ENCODE measurements at regions of chr7 and their contacts with region 1.

Region 1: DNA sequence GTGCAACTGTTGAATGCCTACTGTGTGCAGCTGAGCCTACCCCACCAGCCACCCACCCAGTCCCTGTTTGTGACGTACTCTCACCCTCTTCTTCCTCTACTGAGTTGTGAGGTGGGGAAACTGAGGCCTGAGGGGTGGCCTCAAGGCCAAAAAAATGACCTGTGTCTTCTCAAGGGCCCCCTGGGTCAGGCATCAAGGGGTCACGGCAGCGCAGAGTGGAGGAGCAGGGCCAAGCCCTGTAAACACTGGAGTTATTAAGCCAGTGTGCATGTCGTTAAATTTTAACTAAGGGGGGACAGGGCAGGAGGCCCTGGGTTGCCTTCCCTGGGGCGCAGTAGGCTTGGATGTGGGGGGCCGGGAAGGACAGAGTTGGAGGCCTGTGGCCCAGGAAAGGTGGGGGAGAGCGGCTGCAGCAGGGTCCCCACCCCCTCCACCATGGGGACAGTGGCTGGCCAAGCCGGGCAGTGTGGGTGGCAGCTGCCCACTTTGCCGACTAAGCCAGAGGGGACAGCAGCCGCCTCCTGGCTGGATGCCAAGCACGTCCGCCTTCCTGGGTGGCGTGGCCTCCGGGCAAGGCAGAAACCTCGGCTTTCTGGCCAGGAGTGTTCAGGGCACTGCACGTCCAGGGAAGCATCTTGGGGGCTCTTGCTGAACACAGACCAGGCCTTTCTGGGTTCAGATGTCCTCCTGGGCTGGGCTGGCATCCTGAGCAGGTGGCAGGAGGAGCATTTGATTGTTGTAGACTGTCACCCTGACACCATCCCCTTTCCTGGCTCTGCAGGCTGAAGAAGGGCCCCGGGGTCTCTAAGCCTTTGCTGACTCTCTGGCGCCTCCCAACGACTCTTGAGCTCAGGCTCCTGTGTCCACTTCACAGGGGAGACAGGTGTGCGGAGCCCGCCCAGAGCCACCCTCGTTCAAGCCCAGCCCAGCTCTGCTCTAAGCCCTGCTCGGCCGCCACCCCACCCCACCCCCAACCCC is 1.9 kb downstream of the SLC29A4 start:
- DNase-seq: peak; percentile 89
- ATAC-seq: peak; percentile 91
- H3K4me3 Mint-ChIP-seq: peak overlapping the region; percentile 57
- H3K27ac Mint-ChIP-seq: no peak overlapping the region
- H3K4me1 Mint-ChIP-seq: 0 out of 2 replicates have a peak, but pooled peaks cover 2% of the 10 kb centered on the region
- H3K27me3 Mint-ChIP-seq: peaks cover 19% of the 10 kb centered on the region
- CTCF ChIP-seq: no peak

Region 2: GRCh38 chr7:5243261-5243660 is 41.3 kb before region 1 on chr7:
- CTCF ChIA-PET with region 1: interaction called, 68 read pairs
- POLR2A ChIA-PET with region 1: interaction called, 4 read pairs
- DNase-seq: no peak
- ATAC-seq: no peak
- H3K4me3 Mint-ChIP-seq: no peak overlapping the region
- H3K27ac Mint-ChIP-seq: no peak overlapping the region
- H3K4me1 Mint-ChIP-seq: peaks cover 5% of the 10 kb centered on the region
- H3K27me3 Mint-ChIP-seq: peaks cover 14% of the 10 kb centered on the region
- CTCF ChIP-seq: no peak

Region 3: GRCh38 chr7:5248201-5248885 is 36.2 kb before region 1 on chr7:
- CTCF ChIA-PET with region 1: interaction called, 14 read pairs
- POLR2A ChIA-PET with region 1: no interaction called
- DNase-seq: no peak
- ATAC-seq: no peak
- H3K4me3 Mint-ChIP-seq: no peak overlapping the region
- H3K27ac Mint-ChIP-seq: peak overlapping the region; percentile 60; the same call in 1 of the 2 replicates
- H3K4me1 Mint-ChIP-seq: peaks cover 7% of the 10 kb centered on the region
- H3K27me3 Mint-ChIP-seq: no peaks in the 10 kb centered on the region; the same call in 1 of the 2 replicates
- CTCF ChIP-seq: no peak

Region 4: GRCh38 chr7:5266191-5267028 is 18.2 kb before region 1 on chr7:
- CTCF ChIA-PET with region 1: no interaction called
- POLR2A ChIA-PET with region 1: no interaction called
- DNase-seq: peak; percentile 49
- ATAC-seq: peak; percentile 78
- H3K4me3 Mint-ChIP-seq: no peak overlapping the region
- H3K27ac Mint-ChIP-seq: 0 out of 2 replicates have a peak overlapping the region, but pooled peaks have one; percentile 1
- H3K4me1 Mint-ChIP-seq: peaks cover 10% of the 10 kb centered on the region
- H3K27me3 Mint-ChIP-seq: no peaks in the 10 kb centered on the region
- CTCF ChIP-seq: no peak

Region 5: GRCh38 chr7:5296611-5297226 is 12.1 kb after region 1 on chr7:
- CTCF ChIA-PET with region 1: interaction called, 28 read pairs
- POLR2A ChIA-PET with region 1: no interaction called
- DNase-seq: peak; percentile 88
- ATAC-seq: peak; percentile 81
- H3K4me3 Mint-ChIP-seq: peak overlapping the region; percentile 74
- H3K27ac Mint-ChIP-seq: no peak overlapping the region
- H3K4me1 Mint-ChIP-seq: peaks cover 9% of the 10 kb centered on the region
- H3K27me3 Mint-ChIP-seq: peaks cover 19% of the 10 kb centered on the region
- CTCF ChIP-seq: no peak